Activated CD4-positive, alpha-beta T cell treated with anti-CD3 and anti-CD28 coated beads, Interleukin-2, amount 10 ng/mL, durations not matched to agents 24 days and 14 days (primary cell): ENCODE measurements at regions of chr15 and their contacts with region 1.

Region 1: GRCh38 chr15:41811432-41812195 is 16.3 kb upstream of the JMJD7 start:
- DNase-seq: peak; percentile 92
- H3K4me3 Mint-ChIP-seq: no peak overlapping the region
- H3K27ac Mint-ChIP-seq: peak overlapping the region; percentile 20
- H3K4me1 Mint-ChIP-seq: peaks cover 19% of the 10 kb centered on the region
- H3K27me3 Mint-ChIP-seq: no peaks in the 10 kb centered on the region

Region 2: GRCh38 chr15:41465822-41466421 is 345.7 kb before region 1 on chr15:
- intact Hi-C with region 1: loop called (anchors 1 kb)
- DNase-seq: peak; percentile 83
- H3K4me3 Mint-ChIP-seq: no peak overlapping the region
- H3K27ac Mint-ChIP-seq: no peak overlapping the region
- H3K4me1 Mint-ChIP-seq: peaks cover 6% of the 10 kb centered on the region
- H3K27me3 Mint-ChIP-seq: no peaks in the 10 kb centered on the region

Region 3: GRCh38 chr15:41557673-41558399 is 253.8 kb before region 1 on chr15:
- intact Hi-C with region 1: loop called (anchors 1 kb)
- DNase-seq: peak; percentile 87
- H3K4me3 Mint-ChIP-seq: peak overlapping the region; percentile 84
- H3K27ac Mint-ChIP-seq: peak overlapping the region; percentile 65
- H3K4me1 Mint-ChIP-seq: peaks cover 23% of the 10 kb centered on the region
- H3K27me3 Mint-ChIP-seq: peaks cover 45% of the 10 kb centered on the region

Region 4: GRCh38 chr15:41603941-41604911 is 207.4 kb before region 1 on chr15:
- intact Hi-C with region 1: loop called (anchors 2 kb)
- DNase-seq: peak; percentile 86
- H3K4me3 Mint-ChIP-seq: peak overlapping the region; percentile 61
- H3K27ac Mint-ChIP-seq: no peak overlapping the region
- H3K4me1 Mint-ChIP-seq: peaks cover 11% of the 10 kb centered on the region
- H3K27me3 Mint-ChIP-seq: peaks cover 34% of the 10 kb centered on the region

Region 5: GRCh38 chr15:41621200-41622193 is 190.1 kb before region 1 on chr15:
- intact Hi-C with region 1: loop called (anchors 5 kb)
- DNase-seq: peak; percentile 92
- H3K4me3 Mint-ChIP-seq: peak overlapping the region; percentile 84
- H3K27ac Mint-ChIP-seq: peak overlapping the region; percentile 88
- H3K4me1 Mint-ChIP-seq: peaks cover 13% of the 10 kb centered on the region
- H3K27me3 Mint-ChIP-seq: peaks cover 17% of the 10 kb centered on the region

Region 6: GRCh38 chr15:41774062-41774881 is 37.3 kb before region 1 on chr15 and contains the start of gene MAPKBP1:
- intact Hi-C with region 1: loop called (anchors 1 kb)
- DNase-seq: peak; percentile 100
- H3K4me3 Mint-ChIP-seq: peak within 1 kb of the TSS; percentile 95
- H3K27ac Mint-ChIP-seq: peak within 1 kb of the TSS; percentile 94
- H3K4me1 Mint-ChIP-seq: peaks cover 49% of the 10 kb centered on the region
- H3K27me3 Mint-ChIP-seq: no peaks in the 10 kb centered on the region
- total RNA-seq, gene MAPKBP1: 24.8 and 27.1 TPM in 2 replicates